ENCODE measurements at regions of chr1 and their contacts with region 1.

Region 1: DNA sequence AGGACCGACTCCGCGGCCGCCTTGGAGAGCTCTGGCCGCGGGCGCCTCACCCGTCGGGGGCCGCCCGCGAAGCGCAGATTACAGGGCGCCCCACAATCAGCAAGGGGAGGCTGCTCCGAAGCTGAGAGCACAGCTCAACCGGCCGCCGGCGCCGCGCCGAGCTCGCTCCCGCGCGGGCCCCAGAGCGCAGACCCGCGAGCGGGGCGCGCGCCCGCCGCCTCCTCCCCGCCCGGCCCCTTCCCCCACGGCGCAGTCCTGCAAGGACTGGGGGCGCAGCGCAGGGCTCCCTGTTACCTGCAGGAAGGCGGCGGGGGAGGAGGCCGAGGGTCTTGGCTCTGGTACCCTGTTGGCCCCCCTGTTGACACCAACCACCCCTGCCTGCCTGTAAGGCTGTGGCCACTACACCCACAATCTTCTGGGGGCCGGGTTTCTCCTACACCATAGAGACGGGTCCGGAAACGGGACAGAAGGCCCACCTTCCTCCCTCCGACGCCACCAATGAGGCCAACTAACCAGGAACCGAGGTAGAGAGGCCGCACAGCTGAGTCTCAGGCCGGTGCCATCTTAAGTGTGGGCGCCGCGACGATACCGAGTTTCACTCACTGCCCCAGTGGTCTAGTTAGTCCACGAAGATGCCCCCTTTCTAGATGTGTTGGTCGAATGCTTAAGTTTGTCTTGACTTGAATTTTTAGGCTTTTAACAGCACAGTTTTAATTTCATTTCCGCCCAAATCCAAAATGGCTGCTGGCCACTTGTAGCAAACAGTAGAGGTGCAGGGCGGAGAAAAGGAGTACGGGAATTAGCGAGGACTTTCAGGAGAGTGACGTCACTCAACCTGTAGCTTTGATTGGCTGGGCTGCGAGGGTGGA is at the start of gene SCYL3:
- DNase-seq: peak; percentile 96
- ATAC-seq: peak; percentile 96
- H3K4me3 ChIP-seq: peak within 1 kb of the TSS; percentile 81 to 90 (median 87)
- H3K27ac ChIP-seq: peak within 1 kb of the TSS; percentile 99
- H3K4me1 ChIP-seq: peaks cover 36% of the 10 kb centered on the region
- H3K27me3 ChIP-seq: peaks cover 0 to 4% of the 10 kb centered on the region in 2 experiments; a peak in 1 of 5 replicates
- CTCF ChIP-seq: no peak; the same call in 1 of the 2 replicates
- EP300 ChIP-seq: 0 out of 4 replicates have a peak, but pooled peaks of 1 of the 2 experiments have one; percentile 13
- POLR2A ChIP-seq: peak; percentile 82 to 83
- RAD21 ChIP-seq: no peak; the same call in 1 of the 2 replicates
- total RNA-seq, gene SCYL3: 4.9 and 6.3 TPM in 2 replicates

Region 2: DNA sequence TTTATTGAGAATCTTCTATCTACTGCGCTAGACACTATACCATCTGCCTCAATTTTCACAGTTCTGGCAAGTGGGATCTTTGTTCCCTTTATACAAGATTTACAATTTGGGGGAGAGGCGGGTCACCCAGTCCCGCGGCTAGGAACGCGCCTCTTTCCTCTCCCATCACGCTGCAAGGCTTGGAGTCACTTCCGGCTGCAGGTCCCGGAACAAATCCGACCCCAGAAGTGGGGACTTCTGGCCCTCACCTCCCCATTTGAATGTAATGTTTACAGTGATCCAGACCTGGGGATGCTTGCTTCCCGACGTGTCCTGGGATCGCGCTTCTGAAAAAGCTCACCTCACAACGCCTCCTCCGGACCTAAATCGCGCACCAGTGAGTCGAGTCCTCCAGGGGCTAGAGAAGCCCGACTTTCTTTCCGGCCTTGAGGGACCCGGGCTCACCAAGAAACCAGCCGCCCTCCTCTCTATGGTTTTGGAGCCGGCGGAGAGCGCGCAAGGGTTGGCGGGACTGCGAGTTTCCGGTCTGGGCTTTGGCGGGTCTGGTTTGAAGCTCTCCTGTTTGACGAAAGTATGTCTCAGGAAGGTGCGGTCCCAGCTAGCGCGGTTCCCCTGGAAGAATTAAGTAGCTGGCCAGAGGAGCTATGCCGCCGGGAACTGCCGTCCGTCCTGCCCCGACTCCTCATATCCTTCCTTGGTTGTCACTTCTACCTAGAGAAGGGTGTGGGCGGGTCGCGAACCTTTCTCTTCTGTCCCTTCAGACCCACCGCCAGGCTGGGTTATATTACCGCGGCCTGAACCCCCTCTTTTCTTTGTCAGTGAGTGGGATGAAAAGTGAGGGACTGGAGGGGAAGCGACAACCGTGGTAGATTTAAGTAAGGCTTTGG is 99.0 kb before region 1 on chr1 and contains the start of gene METTL18:
- CTCF ChIA-PET with region 1: no interaction called
- POLR2A ChIA-PET with region 1: interaction called, 14 read pairs
- in situ Hi-C with region 1: no loop called
- intact Hi-C with region 1: no loop called
- DNase-seq: peak; percentile 90
- ATAC-seq: peak; percentile 99
- H3K4me3 ChIP-seq: peak within 1 kb of the TSS; percentile 82 to 88 (median 84)
- H3K27ac ChIP-seq: peak within 1 kb of the TSS; percentile 80
- H3K4me1 ChIP-seq: peaks cover 35% of the 10 kb centered on the region
- H3K27me3 ChIP-seq: no peaks in the 10 kb centered on the region
- CTCF ChIP-seq: no peak
- EP300 ChIP-seq: peak in 1 of 2 experiments; percentile 49; a peak in 1 of 4 replicates
- POLR2A ChIP-seq: peak; percentile 64 to 67
- RAD21 ChIP-seq: peak; percentile 8; the same call in 1 of the 2 replicates
- total RNA-seq, gene METTL18: 6.7 and 11.2 TPM in 2 replicates

Region 3: DNA sequence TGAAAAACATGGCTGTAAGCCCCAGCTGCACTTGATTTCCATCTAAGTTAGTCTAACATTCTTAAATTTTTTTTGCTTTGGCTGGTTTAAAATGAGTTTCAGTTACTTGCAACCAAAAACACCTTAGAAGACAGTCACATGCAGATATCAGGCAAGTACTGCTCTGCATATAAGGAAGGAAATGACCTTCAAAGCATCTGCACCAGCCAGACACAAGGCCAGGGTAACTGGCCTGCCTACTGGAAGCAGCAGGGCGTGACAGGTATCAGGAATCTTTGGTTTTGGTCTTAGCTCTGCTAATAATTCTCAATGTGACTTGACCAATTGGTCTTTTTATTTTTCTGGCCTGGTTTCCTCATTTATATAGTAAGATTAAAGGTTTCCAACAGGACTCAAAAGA is 33.5 kb before region 1 on chr1:
- CTCF ChIA-PET with region 1: no interaction called
- POLR2A ChIA-PET with region 1: interaction called, 3 read pairs
- in situ Hi-C with region 1: no loop called
- intact Hi-C with region 1: loop called (anchors 2 kb)
- DNase-seq: no peak
- ATAC-seq: no peak; the same call in 2 of the 3 replicates
- H3K4me3 ChIP-seq: no peak overlapping the region
- H3K27ac ChIP-seq: peak overlapping the region; percentile 64
- H3K4me1 ChIP-seq: peaks cover 19% of the 10 kb centered on the region
- H3K27me3 ChIP-seq: no peaks in the 10 kb centered on the region
- CTCF ChIP-seq: no peak
- EP300 ChIP-seq: no peak
- POLR2A ChIP-seq: no peak
- RAD21 ChIP-seq: no peak

Region 4: GRCh38 chr1:169914531-169914930 is 20.8 kb after region 1 on chr1:
- CTCF ChIA-PET with region 1: no interaction called
- POLR2A ChIA-PET with region 1: no interaction called
- in situ Hi-C with region 1: no loop called
- intact Hi-C with region 1: no loop called
- DNase-seq: no peak
- ATAC-seq: no peak
- H3K4me3 ChIP-seq: no peak overlapping the region
- H3K27ac ChIP-seq: no peak overlapping the region
- H3K4me1 ChIP-seq: no peaks in the 10 kb centered on the region
- H3K27me3 ChIP-seq: peaks cover 0 to 11% of the 10 kb centered on the region in 2 experiments; a peak in 1 of 5 replicates
- CTCF ChIP-seq: no peak
- EP300 ChIP-seq: no peak
- POLR2A ChIP-seq: no peak
- RAD21 ChIP-seq: no peak

Region 5: GRCh38 chr1:170067253-170067819 is 173.6 kb after region 1 on chr1:
- CTCF ChIA-PET with region 1: no interaction called
- POLR2A ChIA-PET with region 1: no interaction called
- in situ Hi-C with region 1: no loop called
- intact Hi-C with region 1: loop called (anchors 10 kb)
- DNase-seq: no peak
- ATAC-seq: no peak
- H3K4me3 ChIP-seq: no peak overlapping the region
- H3K27ac ChIP-seq: no peak overlapping the region
- H3K4me1 ChIP-seq: peaks cover 10% of the 10 kb centered on the region
- H3K27me3 ChIP-seq: no peaks in the 10 kb centered on the region
- CTCF ChIP-seq: no peak
- EP300 ChIP-seq: no peak
- POLR2A ChIP-seq: no peak
- RAD21 ChIP-seq: no peak

Measured in HepG2 (cell line).